ENCODE measurements at regions of chr13 and their contacts with region 1.

Region 1: GRCh38 chr13:99566125-99567083 is 65.1 kb downstream of the TM9SF2 start:
- DNase-seq: no peak
- ATAC-seq: no peak
- H3K4me3 ChIP-seq: peak overlapping the region in 1 of 4 donors; percentile 13
- H3K27ac ChIP-seq: no peak overlapping the region
- H3K4me1 ChIP-seq: no peaks in the 10 kb centered on the region
- H3K27me3 ChIP-seq: no peaks in the 10 kb centered on the region
- CTCF ChIP-seq: no peak
- POLR2A ChIP-seq: no peak

Region 2: DNA sequence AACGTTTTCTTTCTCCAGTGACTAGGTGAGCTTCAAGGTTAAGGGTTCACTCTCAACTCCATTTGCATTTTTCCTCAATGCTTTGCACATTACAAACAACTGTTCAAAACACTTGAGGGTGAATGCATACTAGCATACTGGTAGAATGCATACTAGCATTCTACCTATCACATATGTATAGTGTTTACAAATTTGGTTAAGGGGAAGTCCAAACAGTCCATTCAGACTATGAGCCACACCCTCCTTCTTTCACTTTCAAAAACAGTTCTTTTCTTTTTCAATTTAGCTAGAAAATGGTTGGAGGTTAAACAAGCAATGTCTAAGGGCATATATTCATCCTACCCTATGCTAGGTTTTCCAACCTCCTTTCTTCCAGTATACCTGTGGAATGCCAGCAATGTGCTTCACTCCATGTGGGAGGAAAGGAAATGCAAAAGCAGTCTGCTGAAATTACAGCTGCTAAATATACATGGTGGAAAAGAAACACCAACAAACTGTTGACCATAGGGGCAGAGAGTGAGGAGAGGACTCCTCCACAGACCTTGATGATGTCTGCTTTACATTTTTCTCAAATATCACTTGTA is 691.2 kb before region 1 on chr13:
- in situ Hi-C with region 1: no loop called
- intact Hi-C with region 1: no loop called
- DNase-seq: no peak
- ATAC-seq: no peak
- H3K4me3 ChIP-seq: no peak overlapping the region
- H3K27ac ChIP-seq: no peak overlapping the region
- H3K4me1 ChIP-seq: peaks cover under 1 to 8% of the 10 kb centered on the region in 2 donors
- H3K27me3 ChIP-seq: no peaks in the 10 kb centered on the region
- CTCF ChIP-seq: no peak
- POLR2A ChIP-seq: no peak

Region 3: GRCh38 chr13:99585609-99586008 is 19.2 kb after region 1 on chr13:
- in situ Hi-C with region 1: no loop called
- intact Hi-C with region 1: loop called (anchors 1 kb)
- DNase-seq: no peak
- ATAC-seq: no peak
- H3K4me3 ChIP-seq: no peak overlapping the region
- H3K27ac ChIP-seq: no peak overlapping the region
- H3K4me1 ChIP-seq: peaks cover 5 to 9% of the 10 kb centered on the region in 2 donors
- H3K27me3 ChIP-seq: no peaks in the 10 kb centered on the region
- CTCF ChIP-seq: no peak
- POLR2A ChIP-seq: no peak